ENCODE measurements at regions of chr2 and their contacts with region 1.

Region 1: GRCh38 chr2:184780384-184780783 is 182.1 kb downstream of the ZNF804A start:
- DNase-seq: no peak
- CTCF ChIP-seq: no peak

Region 2: GRCh38 chr2:184756897-184757296 is 23.5 kb before region 1 on chr2:
- CTCF ChIA-PET with region 1: no interaction called
- POLR2A ChIA-PET with region 1: no interaction called
- DNase-seq: no peak
- CTCF ChIP-seq: no peak

Region 3: GRCh38 chr2:184769023-184769422 is 11.4 kb before region 1 on chr2:
- CTCF ChIA-PET with region 1: interaction called, 12 read pairs
- POLR2A ChIA-PET with region 1: no interaction called
- DNase-seq: no peak
- CTCF ChIP-seq: no peak